ENCODE measurements at regions of chr3 and their contacts with region 1.

Region 1: DNA sequence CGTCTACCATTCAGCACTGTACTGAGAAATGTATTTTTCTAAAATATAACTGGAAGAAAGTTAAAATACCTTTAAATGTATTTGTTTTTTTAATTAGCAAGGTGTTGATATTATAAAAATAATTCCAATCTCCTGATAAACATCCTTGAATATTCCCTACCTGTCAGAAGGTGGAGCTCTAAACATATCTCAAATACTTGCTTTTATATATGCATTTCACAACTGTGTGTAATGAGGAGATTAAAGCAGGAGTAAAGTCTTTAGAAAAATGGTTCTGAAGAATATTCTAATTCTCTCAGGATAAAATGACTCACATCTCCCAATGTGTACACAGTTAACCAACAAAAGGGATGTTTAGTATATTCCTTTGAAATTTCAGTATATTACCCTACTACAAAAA is 422.7 kb downstream of the PLCL2 start:
- DNase-seq: no peak
- H3K4me3 ChIP-seq: no peak overlapping the region
- H3K4me3 Mint-ChIP-seq: no peak overlapping the region
- H3K27ac Mint-ChIP-seq: no peak overlapping the region
- H3K4me1 ChIP-seq: no peaks in the 10 kb centered on the region
- H3K4me1 Mint-ChIP-seq: no peaks in the 10 kb centered on the region
- H3K27me3 ChIP-seq: no peaks in the 10 kb centered on the region
- H3K27me3 Mint-ChIP-seq: no peaks in the 10 kb centered on the region
- CTCF ChIP-seq: peak in 1 of 2 experiments; percentile 3

Region 2: DNA sequence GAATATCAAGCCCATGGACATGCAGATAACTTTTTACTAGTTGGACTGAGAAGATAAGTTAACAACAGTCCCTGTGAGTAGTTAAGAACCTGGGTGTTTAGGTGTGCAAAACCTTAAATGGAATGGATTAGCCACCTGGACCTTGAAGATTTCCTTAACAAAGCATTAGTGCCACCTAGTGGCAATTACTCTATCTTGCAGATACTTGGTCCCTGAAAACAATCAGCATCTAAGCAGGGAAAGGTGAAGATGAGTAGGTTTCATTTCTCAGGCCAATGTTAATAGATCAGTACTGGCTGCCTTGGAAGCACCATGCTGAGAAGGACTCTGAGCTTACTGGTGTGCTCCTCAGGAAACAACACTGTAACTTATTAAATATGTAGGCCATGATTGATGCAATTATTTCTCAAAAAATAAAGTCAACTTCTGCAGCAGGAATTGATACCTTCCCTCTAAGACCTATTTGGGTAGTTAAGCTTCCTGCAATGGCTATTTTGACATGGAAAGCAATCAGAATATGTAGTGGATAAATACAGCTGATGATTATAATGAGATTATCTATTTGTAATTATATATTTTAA is 105.6 kb after region 1 on chr3:
- CTCF ChIA-PET with region 1: interaction called, 3 read pairs
- POLR2A ChIA-PET with region 1: no interaction called
- intact Hi-C with region 1: loop called (anchors 1 kb)
- DNase-seq: peak in 1 of 2 experiments; percentile 51
- H3K4me3 ChIP-seq: no peak overlapping the region
- H3K4me3 Mint-ChIP-seq: no peak overlapping the region
- H3K27ac Mint-ChIP-seq: no peak overlapping the region
- H3K4me1 ChIP-seq: no peaks in the 10 kb centered on the region
- H3K4me1 Mint-ChIP-seq: no peaks in the 10 kb centered on the region
- H3K27me3 ChIP-seq: no peaks in the 10 kb centered on the region
- H3K27me3 Mint-ChIP-seq: no peaks in the 10 kb centered on the region
- CTCF ChIP-seq: peak; percentile 62 to 71

Measured in Caco-2 (cell line).